ENCODE measurements at regions of chr12 and their contacts with region 1.

Region 1: GRCh38 chr12:132761032-132761920 is at the start of gene ANKLE2:
- DNase-seq: peak; percentile 67 to 86
- ATAC-seq: peak; percentile 54
- H3K4me3 ChIP-seq: peak within 1 kb of the TSS; percentile 98
- H3K27ac ChIP-seq: peak within 1 kb of the TSS; percentile 94 to 96
- H3K4me1 ChIP-seq: peaks cover 0 to 2% of the 10 kb centered on the region in 2 donors
- H3K27me3 ChIP-seq: no peaks in the 10 kb centered on the region
- total RNA-seq, gene ANKLE2: 52.0 to 65.1 TPM

Region 2: DNA sequence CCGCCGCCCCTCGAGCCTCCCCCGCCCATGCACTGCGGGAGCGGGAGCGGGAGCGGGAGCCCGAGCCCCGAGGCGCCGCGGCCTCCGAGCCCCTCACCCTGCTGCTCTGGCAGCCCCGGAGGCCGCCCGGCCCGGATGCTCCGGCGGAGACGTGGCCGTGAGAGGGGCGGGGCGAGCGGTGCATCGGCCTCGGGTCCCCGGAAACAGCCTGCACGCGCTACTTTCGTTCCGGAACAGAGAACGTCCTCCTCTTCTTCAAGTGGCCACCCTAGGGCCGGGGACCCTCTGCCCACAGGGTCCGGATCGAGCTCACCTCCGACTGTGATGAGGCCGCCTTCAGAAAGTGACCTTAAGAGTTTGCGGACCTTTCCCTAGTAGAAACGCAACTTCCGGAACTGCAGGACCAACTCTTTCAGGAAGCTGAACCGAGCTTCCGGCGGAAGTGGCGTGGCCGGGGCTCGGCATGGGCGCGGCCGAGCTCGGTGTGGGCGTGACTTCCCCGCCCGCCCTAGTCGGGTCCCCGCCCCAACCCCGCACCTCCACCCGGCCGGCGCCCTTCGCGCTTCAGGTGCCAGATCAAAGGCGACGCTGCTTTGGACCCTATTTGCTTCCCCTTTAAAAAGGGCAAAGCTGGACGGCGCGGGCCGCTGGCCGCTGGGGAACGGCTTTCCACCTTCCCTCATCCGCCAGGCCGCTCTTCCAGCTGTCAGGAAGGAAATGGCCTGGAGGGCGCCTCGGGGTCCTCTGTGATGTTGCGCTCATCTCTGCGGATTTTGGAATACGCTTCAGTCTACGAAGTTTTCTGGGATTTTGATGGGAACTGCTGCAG is 67.6 kb after region 1 on chr12 and contains the start of gene GOLGA3:
- intact Hi-C with region 1: loop called in 1 of 2 experiments (anchors 5 kb)
- DNase-seq: peak; percentile 96 to 98
- ATAC-seq: peak; percentile 99
- H3K4me3 ChIP-seq: peak within 1 kb of the TSS; percentile 61 to 85
- H3K27ac ChIP-seq: peak within 1 kb of the TSS; percentile 63 to 91
- H3K4me1 ChIP-seq: no peaks in the 10 kb centered on the region
- H3K27me3 ChIP-seq: no peaks in the 10 kb centered on the region
- total RNA-seq, gene GOLGA3: 83.1 to 91.2 TPM

Measured in aorta (tissue), 5 donors.